Activated CD8-positive, alpha-beta T cell treated with anti-CD3 and anti-CD28 coated beads, Interleukin-2, amount 10 ng/mL, durations not matched to agents 7 days and 5 days (primary cell): ENCODE measurements at regions of chr1 and their contacts with region 1.

Region 1: DNA sequence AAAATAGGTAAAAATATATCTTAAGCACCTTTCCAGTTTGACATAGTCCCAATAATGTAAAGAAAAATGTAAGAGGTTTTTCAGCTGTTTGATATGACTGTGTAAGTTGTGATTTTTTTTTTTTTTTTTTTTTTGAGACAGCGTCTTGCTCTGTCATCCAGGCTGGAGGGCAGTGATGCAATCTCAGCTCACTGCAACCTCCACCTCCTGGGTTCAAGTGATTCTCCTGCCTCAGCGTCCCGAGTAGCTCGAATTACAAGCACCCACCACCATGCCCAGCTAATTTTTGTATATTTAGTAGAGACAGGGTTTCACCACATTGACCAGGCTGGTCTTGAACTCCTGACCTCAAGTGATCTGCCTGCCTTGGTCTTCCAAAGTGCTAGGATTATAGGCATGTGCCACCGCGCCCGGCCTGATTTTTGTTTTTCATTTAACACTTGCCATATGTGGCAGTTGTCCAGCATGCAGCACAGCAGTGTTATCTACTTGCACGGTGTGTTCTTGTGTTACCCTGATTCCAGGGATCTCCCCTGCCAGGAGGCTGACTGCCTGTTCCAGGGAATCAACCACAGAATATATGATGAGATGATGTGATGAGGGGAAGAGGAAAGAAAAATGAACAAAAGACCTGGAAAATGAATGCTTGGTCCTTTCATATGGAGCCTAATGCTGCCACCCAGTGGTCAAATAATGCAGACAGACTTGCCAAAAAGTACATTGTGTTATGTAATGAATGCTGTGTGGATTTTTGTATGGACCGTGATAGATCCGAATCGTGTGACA is 79.0 kb downstream of the RAVER2 start:
- DNase-seq: peak; percentile 75
- ATAC-seq: peak; percentile 62
- H3K4me3 Mint-ChIP-seq: no peak overlapping the region
- H3K27ac Mint-ChIP-seq: no peak overlapping the region
- H3K4me1 Mint-ChIP-seq: peaks cover 23% of the 10 kb centered on the region
- H3K27me3 Mint-ChIP-seq: peaks cover 6% of the 10 kb centered on the region

Region 2: GRCh38 chr1:64834734-64835133 is 10.8 kb after region 1 on chr1:
- CTCF ChIA-PET with region 1: interaction called, 15 read pairs
- POLR2A ChIA-PET with region 1: no interaction called
- DNase-seq: no peak
- ATAC-seq: no peak
- H3K4me3 Mint-ChIP-seq: no peak overlapping the region
- H3K27ac Mint-ChIP-seq: no peak overlapping the region
- H3K4me1 Mint-ChIP-seq: no peaks in the 10 kb centered on the region
- H3K27me3 Mint-ChIP-seq: no peaks in the 10 kb centered on the region